PC-3 (cell line): ENCODE measurements at regions of chr21 and their contacts with region 1.

Region 1: DNA sequence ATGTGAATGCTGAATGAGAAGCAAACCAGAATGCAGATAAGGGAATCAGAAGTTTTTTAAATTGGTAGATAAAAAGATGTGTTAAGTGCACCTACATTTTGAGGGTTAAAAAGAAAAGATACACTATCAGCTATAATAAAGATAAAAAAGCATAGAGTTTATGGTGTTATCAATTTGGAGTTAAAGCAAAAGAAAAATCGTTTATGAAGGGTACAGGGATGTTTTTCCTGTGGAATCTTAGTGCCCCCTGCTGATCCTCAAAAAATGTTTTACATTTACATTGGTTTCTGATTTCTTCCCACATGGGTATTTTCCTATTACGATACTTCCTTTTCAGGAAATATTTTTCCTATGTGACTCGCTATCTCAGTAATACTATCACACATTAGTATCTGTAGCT is 293.5 kb downstream of the MRPL39 start:
- DNase-seq: peak; percentile 63
- ATAC-seq: peak; percentile 86
- H3K4me3 ChIP-seq: peak overlapping the region; percentile 37; the same call in 1 of the 2 replicates
- H3K27ac ChIP-seq: no peak overlapping the region
- H3K4me1 ChIP-seq: 0 out of 2 replicates have a peak, but pooled peaks cover 8% of the 10 kb centered on the region
- H3K27me3 ChIP-seq: no peaks in the 10 kb centered on the region
- CTCF ChIP-seq: peak; percentile 75

Region 2: GRCh38 chr21:24895885-24896734 is 417.7 kb before region 1 on chr21:
- CTCF ChIA-PET with region 1: no interaction called
- POLR2A ChIA-PET with region 1: no interaction called
- intact Hi-C with region 1: loop called (anchors 1 kb)
- DNase-seq: peak; percentile 58
- ATAC-seq: peak; percentile 94
- H3K4me3 ChIP-seq: no peak overlapping the region
- H3K27ac ChIP-seq: no peak overlapping the region
- H3K4me1 ChIP-seq: no peaks in the 10 kb centered on the region
- H3K27me3 ChIP-seq: no peaks in the 10 kb centered on the region
- CTCF ChIP-seq: peak; percentile 71

Region 3: DNA sequence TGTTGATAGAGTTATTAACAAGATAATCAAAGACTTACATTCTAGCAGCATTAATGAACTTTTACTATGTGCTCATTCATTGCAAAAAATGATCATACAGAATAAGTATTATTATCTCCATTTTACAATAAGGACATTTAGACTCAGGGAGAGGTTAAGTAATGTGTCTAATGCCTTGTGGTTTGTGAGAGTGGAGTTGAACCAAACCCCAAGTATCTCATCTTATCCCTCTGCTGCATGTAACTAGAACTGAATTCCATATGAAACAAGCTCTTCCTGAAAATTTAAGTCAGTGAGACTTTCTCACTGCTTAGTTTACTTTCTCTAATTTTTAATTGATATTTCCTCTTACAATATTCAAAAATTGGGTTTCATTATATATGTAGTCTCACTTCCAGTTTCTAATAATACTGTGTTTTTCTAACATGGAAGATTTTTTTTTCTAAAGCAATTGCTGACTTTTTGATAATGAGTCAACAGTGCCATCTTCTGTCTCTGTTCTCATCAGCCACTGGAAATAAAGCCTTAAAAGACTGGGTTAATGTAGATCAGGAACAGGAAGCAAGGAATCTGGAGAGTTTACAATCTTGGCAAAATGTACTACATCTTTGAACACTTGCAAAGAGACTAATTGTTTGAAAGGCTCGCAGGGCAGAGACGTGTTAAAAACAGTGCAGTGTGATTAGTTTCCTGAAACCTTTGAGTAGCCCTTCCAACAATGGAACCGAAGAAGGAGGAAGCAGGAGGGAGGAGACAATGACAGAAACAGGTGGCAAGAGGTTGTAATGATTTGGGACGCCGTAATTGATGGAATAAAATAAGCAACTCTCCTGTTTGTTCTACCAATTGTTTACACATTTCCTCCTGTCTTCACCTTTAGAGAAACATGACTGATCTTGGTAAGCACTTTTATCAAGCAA is 274.1 kb before region 1 on chr21:
- CTCF ChIA-PET with region 1: no interaction called
- POLR2A ChIA-PET with region 1: no interaction called
- intact Hi-C with region 1: loop called (anchors 1 kb)
- DNase-seq: peak; percentile 47
- ATAC-seq: peak; percentile 80
- H3K4me3 ChIP-seq: peak overlapping the region; percentile 50
- H3K27ac ChIP-seq: no peak overlapping the region
- H3K4me1 ChIP-seq: no peaks in the 10 kb centered on the region
- H3K27me3 ChIP-seq: no peaks in the 10 kb centered on the region
- CTCF ChIP-seq: peak; percentile 61

Region 4: DNA sequence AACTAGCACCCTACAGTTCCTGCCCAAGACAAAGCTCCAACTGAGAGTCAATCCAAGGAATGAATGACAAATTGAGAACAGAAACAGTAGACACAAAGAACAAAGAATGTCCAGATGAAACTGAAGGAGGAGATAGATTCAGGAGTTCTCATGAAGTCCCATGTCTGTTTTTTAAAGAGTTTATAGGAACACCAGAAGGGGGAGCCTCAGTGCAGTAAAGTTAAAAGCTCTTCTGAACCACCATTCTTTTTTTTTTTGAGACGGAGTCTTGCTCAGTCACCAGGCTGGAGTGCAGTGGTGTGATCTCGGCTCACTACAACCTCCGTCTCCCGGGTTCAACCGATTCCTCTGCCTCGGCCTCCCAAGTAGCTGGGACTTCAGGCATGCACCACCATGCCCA is 30.1 kb before region 1 on chr21:
- CTCF ChIA-PET with region 1: interaction called, 6 read pairs
- POLR2A ChIA-PET with region 1: no interaction called
- intact Hi-C with region 1: loop called (anchors 1 kb)
- DNase-seq: peak; percentile 62
- ATAC-seq: peak; percentile 53
- H3K4me3 ChIP-seq: no peak overlapping the region
- H3K27ac ChIP-seq: no peak overlapping the region
- H3K4me1 ChIP-seq: no peaks in the 10 kb centered on the region
- H3K27me3 ChIP-seq: no peaks in the 10 kb centered on the region
- CTCF ChIP-seq: peak; percentile 60